Testis (tissue), 5 donors: ENCODE measurements at regions of chrX and their contacts with region 1.

Region 1: DNA sequence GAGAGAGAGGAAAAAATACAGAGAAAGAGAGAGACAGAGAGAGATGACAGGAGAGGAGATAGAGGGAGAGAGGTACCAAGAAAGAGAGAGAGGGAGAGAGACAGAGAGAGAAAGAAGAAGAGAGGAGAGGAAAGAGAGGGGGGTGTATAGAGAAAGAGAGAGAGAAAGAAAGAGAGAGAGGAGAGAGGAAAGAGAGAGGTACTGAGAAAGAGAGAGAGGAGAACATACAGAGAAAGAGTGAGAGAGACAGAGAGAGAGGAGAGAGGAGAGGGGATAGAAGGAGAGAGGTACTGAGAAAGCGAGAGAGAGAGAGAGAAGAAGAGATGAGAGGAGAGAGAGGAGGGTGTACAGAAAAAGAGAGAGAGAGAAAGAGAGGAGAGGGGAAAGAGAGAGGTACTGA is 269.4 kb downstream of the CRLF2 start:
- DNase-seq: no peak
- H3K4me3 ChIP-seq: no peak overlapping the region
- H3K27ac ChIP-seq: no peak overlapping the region
- H3K4me1 ChIP-seq: no peaks in the 10 kb centered on the region
- H3K27me3 ChIP-seq: no peaks in the 10 kb centered on the region
- CTCF ChIP-seq: no peak
- POLR2A ChIP-seq: no peak

Region 2: DNA sequence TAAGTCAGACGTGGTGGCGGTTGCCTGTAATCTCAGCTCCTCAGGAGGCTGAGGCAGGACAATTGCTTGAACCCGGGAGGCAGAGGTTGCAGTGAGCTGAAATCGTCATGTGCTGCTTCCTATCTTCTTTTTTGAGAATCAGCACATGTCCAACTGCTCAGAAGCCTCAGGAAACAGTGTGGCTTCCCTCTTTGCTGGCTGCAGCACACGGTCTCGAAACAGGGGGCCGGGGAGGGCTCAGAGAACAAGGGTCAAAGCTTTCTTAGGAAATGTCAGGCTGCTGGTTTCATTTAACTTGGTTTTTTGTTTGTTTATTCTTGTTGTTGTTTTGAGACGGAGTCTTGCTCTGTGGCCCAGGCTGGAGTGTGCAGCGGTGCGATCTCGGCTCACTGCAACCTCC is 238.1 kb after region 1 on chrX:
- intact Hi-C with region 1: loop called (anchors 2 kb)
- DNase-seq: no peak
- H3K4me3 ChIP-seq: no peak overlapping the region
- H3K27ac ChIP-seq: no peak overlapping the region
- H3K4me1 ChIP-seq: no peaks in the 10 kb centered on the region
- H3K27me3 ChIP-seq: no peaks in the 10 kb centered on the region
- CTCF ChIP-seq: no peak
- POLR2A ChIP-seq: no peak